Sigmoid colon (tissue), 7 donors: ENCODE measurements at regions of chr7 and their contacts with region 1.

Region 1: GRCh38 chr7:19982841-19983835 is 209.7 kb upstream of the TMEM196 start:
- DNase-seq: peak; percentile 82
- H3K4me3 ChIP-seq: no peak overlapping the region
- H3K27ac ChIP-seq: no peak overlapping the region
- H3K4me1 ChIP-seq: peaks cover 0 to 5% (median 0%) of the 10 kb centered on the region in 4 donors
- H3K27me3 ChIP-seq: no peaks in the 10 kb centered on the region
- CTCF ChIP-seq: peak in 3 of 4 experiments; percentile 34 to 48 (median 43)
- EP300 ChIP-seq: no peak
- POLR2A ChIP-seq: no peak

Region 2: DNA sequence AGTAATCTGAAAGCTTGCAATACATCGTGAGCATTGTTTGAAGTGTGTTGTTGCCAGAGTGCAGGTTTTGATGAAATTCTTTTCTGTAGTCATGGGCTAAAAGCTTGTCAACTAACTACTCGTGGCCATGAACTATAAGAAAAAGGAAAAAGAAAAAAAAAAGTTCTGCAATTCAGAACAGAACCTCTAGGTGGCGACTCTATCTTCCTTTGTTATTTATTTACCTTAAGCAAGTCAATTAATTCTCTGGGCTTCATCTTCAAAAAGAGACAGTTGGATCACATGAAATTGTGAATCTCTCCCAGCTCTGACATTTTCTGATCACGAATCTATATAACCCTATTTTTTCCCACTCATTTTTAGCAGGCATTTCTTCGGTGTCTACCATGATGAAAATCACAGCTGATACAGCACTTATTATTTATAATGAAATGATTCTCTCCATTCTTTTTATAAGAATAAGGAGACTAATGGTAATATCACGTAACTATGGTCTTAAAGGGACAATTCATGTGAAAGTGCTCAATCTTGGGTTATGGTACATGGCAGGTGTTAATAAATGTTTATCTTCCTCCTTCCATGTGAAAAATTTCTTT is 228.5 kb before region 1 on chr7:
- intact Hi-C with region 1: loop called (anchors 10 kb)
- DNase-seq: no peak
- H3K4me3 ChIP-seq: no peak overlapping the region
- H3K27ac ChIP-seq: no peak overlapping the region
- H3K4me1 ChIP-seq: no peaks in the 10 kb centered on the region
- H3K27me3 ChIP-seq: no peaks in the 10 kb centered on the region
- CTCF ChIP-seq: peak in 3 of 4 experiments; percentile 23 to 62 (median 30)
- EP300 ChIP-seq: no peak
- POLR2A ChIP-seq: no peak

Region 3: GRCh38 chr7:20075992-20076820 is 93.1 kb after region 1 on chr7:
- intact Hi-C with region 1: no loop called
- DNase-seq: no peak
- H3K4me3 ChIP-seq: no peak overlapping the region
- H3K27ac ChIP-seq: peak overlapping the region in 3 of 4 donors; percentile 45 to 60 (median 56)
- H3K4me1 ChIP-seq: peaks cover 0 to 39% (median 27%) of the 10 kb centered on the region in 4 donors
- H3K27me3 ChIP-seq: no peaks in the 10 kb centered on the region
- CTCF ChIP-seq: no peak
- EP300 ChIP-seq: no peak
- POLR2A ChIP-seq: no peak

Region 4: GRCh38 chr7:20172736-20173334 is 189.7 kb after region 1 on chr7:
- intact Hi-C with region 1: loop called (anchors 1 kb)
- DNase-seq: peak; percentile 88
- H3K4me3 ChIP-seq: no peak overlapping the region
- H3K27ac ChIP-seq: no peak overlapping the region
- H3K4me1 ChIP-seq: peaks cover 0 to 5% (median 0%) of the 10 kb centered on the region in 4 donors
- H3K27me3 ChIP-seq: no peaks in the 10 kb centered on the region
- CTCF ChIP-seq: peak; percentile 40 to 72 (median 62)
- EP300 ChIP-seq: no peak
- POLR2A ChIP-seq: no peak

Region 5: GRCh38 chr7:20310963-20311742 is 328.0 kb after region 1 on chr7:
- intact Hi-C with region 1: loop called (anchors 10 kb)
- DNase-seq: no peak
- H3K4me3 ChIP-seq: no peak overlapping the region
- H3K27ac ChIP-seq: no peak overlapping the region
- H3K4me1 ChIP-seq: no peaks in the 10 kb centered on the region
- H3K27me3 ChIP-seq: no peaks in the 10 kb centered on the region
- CTCF ChIP-seq: peak in 2 of 4 experiments; percentile 15 to 24
- EP300 ChIP-seq: no peak
- POLR2A ChIP-seq: no peak